ENCODE measurements at regions of chr14 and their contacts with region 1.

Region 1: DNA sequence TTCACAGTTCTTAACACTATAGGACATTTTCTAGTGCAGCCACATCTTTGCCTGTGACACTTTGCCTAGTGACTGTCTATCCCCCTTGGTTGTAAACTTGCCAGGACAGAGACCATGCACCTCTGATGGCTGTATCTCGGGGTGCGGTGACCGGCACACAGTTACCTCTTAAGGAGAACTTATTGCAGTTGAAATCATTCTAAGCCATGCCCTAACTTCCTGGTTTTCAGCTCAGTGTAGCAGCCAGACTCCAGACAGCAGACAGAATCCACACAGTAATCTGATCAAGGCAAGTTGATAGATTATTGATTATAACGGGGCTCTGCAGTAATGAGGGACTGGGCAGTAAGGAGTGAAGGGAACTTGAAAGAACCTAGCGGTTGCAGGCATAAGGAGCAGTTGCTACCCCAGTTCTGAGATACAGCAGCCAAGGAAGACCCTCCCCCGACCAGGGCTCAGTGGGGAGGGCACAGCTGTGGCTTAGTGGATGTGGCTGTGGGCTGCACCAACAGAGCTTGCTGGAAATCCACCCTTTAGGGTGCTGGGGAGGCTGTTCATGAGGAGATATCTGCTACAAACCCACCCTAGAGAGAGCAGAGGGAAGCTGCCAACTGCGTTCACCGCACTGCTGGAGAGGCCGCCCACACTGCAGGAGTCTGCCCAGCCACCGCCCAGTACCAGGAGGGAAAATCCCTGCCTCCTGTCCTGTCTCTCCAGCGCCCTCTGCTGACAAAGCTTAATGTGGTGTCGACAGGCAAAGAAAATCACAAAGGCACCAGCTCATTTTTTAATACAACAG is 58.2 kb upstream of the BEGAIN start:
- DNase-seq: peak; percentile 68
- H3K4me3 ChIP-seq: no peak overlapping the region
- H3K27ac ChIP-seq: no peak overlapping the region
- H3K4me1 ChIP-seq: peaks cover 14% of the 10 kb centered on the region
- H3K27me3 ChIP-seq: peaks cover under 1 to 4% of the 10 kb centered on the region in 2 experiments
- CTCF ChIP-seq: peak; percentile 72 to 83
- POLR2A ChIP-seq: no peak

Region 2: GRCh38 chr14:100406505-100407131 is 238.8 kb before region 1 on chr14:
- CTCF ChIA-PET with region 1: interaction called, 11 read pairs
- POLR2A ChIA-PET with region 1: no interaction called
- dilution Hi-C with region 1: loop called (anchors 25 kb)
- intact Hi-C with region 1: no loop called
- DNase-seq: no peak
- H3K4me3 ChIP-seq: no peak overlapping the region
- H3K27ac ChIP-seq: no peak overlapping the region
- H3K4me1 ChIP-seq: peaks cover 4% of the 10 kb centered on the region
- H3K27me3 ChIP-seq: no peaks in the 10 kb centered on the region
- CTCF ChIP-seq: no peak
- POLR2A ChIP-seq: no peak

Region 3: GRCh38 chr14:100440187-100440631 is 205.2 kb before region 1 on chr14:
- CTCF ChIA-PET with region 1: interaction called, 34 read pairs
- POLR2A ChIA-PET with region 1: no interaction called
- dilution Hi-C with region 1: no loop called
- intact Hi-C with region 1: loop called (anchors 2 kb)
- DNase-seq: peak; percentile 50
- H3K4me3 ChIP-seq: no peak overlapping the region
- H3K27ac ChIP-seq: no peak overlapping the region
- H3K4me1 ChIP-seq: peaks cover 5% of the 10 kb centered on the region
- H3K27me3 ChIP-seq: no peaks in the 10 kb centered on the region
- CTCF ChIP-seq: peak; percentile 26 to 46
- POLR2A ChIP-seq: no peak

Region 4: DNA sequence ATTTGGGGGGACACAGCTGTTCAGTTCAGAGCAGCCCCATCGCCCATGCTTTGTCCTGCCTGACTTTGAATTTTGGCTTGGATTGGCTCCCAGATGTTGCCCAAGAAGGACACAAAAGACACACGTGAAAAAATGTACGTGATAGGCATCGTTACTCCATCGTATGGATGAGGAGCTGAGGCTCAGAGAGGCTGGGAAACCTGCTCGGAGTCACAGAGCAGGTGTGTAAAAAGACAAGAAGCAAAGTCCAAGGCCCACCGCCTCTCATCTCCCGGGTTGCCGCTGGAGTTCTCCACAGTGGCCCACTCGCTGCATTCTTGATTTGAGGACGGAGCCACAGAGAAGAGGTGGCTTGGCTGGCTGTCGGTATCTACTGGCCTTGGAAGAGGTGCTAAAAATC is 17.2 kb before region 1 on chr14:
- CTCF ChIA-PET with region 1: interaction called, 12 read pairs
- POLR2A ChIA-PET with region 1: no interaction called
- dilution Hi-C with region 1: no loop called
- intact Hi-C with region 1: no loop called
- DNase-seq: no peak
- H3K4me3 ChIP-seq: no peak overlapping the region
- H3K27ac ChIP-seq: no peak overlapping the region
- H3K4me1 ChIP-seq: no peaks in the 10 kb centered on the region
- H3K27me3 ChIP-seq: peaks cover 4 to 7% of the 10 kb centered on the region in 2 experiments
- CTCF ChIP-seq: no peak
- POLR2A ChIP-seq: no peak